Panc1 (cell line): ENCODE measurements at regions of chr2 and their contacts with region 1.

Region 1: GRCh38 chr2:159797543-159798375 is at the start of gene CD302:
- DNase-seq: no peak
- ATAC-seq: peak; percentile 90
- H3K4me3 ChIP-seq: peak within 1 kb of the TSS; percentile 71 to 81
- H3K27ac ChIP-seq: peak within 1 kb of the TSS; percentile 68
- H3K4me1 ChIP-seq: peaks cover 7% of the 10 kb centered on the region
- H3K27me3 ChIP-seq: peaks cover 20% of the 10 kb centered on the region
- CTCF ChIP-seq: no peak
- total RNA-seq, gene CD302: 3.3 TPM

Region 2: DNA sequence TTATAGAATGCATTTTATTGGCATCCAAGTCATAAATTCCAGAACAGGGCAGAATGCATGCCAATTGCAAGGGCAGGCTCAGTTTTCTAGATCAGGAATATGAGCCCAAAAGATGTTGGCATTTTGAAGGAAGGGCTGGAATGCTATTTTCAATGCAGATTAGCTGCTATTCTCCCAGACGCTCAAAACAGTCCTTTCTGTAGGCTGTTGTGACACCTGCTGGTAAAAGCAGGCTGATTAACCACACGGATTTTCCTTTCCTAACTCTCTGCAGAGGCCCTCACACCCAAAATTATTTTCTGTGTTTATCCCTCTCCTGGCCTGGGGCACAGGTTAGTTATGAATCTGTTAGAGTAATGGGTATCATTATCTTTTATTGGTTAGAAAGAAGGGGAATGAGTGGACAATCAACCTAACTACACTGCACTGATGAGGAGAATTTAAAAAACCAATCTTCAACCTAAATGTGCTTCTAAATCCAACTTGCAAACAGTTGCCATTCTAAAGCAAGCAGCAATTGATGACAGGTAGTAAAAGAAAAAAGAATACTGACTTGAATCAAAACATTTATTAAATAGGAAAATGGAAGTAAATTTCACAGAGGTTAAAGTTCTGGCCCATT is 170.6 kb after region 1 on chr2:
- CTCF ChIA-PET with region 1: no interaction called
- POLR2A ChIA-PET with region 1: no interaction called
- in situ Hi-C with region 1: no loop called
- intact Hi-C with region 1: loop called (anchors 10 kb)
- DNase-seq: no peak
- ATAC-seq: peak; percentile 94
- H3K4me3 ChIP-seq: no peak overlapping the region
- H3K27ac ChIP-seq: no peak overlapping the region
- H3K4me1 ChIP-seq: no peaks in the 10 kb centered on the region
- H3K27me3 ChIP-seq: no peaks in the 10 kb centered on the region
- CTCF ChIP-seq: peak; percentile 77